Esophagus squamous epithelium (tissue), 5 donors: ENCODE measurements at regions of chr11 and their contacts with region 1.

Region 1: DNA sequence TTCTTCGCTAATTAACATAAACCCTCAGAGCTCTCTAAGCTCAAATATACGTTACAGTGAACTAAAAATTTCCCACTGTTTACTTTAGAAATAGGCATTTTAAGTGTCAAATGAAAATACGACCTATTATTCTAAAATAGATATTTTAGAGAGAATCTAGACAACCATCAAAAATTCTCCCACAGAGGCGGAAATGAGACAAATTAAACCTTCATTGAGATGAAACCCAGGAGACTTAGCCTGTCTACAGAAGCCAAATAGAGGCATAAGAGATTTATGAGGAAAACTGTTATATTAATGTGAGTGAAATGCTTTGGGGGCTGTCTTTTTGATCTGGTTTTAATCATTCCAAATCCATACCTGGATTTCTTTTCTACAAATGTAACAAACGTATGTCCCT is 232.0 kb upstream of the GRIA4 start:
- DNase-seq: no peak
- H3K4me3 ChIP-seq: no peak overlapping the region
- H3K27ac ChIP-seq: no peak overlapping the region
- H3K4me1 ChIP-seq: no peaks in the 10 kb centered on the region
- H3K27me3 ChIP-seq: no peaks in the 10 kb centered on the region
- CTCF ChIP-seq: no peak
- POLR2A ChIP-seq: no peak

Region 2: DNA sequence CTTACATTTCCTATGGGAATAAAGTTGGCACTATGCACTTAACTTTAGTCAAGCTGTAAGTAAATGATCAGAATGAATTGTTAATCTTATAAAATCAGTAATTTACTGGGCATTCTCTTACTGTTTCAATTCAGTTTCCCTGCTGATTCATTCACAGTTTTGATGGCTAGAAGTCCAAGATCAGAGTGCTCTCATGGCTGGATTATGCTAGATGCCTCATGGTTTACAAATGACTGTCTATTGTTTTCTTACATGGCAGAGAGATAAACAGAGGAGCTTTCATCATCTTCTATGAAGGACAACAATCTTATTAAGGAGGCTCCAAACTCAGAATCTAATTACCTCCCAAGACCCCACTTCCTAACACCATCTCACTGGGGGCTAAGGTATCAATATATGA is 103.2 kb before region 1 on chr11:
- intact Hi-C with region 1: no loop called
- DNase-seq: no peak
- H3K4me3 ChIP-seq: no peak overlapping the region
- H3K27ac ChIP-seq: no peak overlapping the region
- H3K4me1 ChIP-seq: no peaks in the 10 kb centered on the region
- H3K27me3 ChIP-seq: no peaks in the 10 kb centered on the region
- CTCF ChIP-seq: no peak
- POLR2A ChIP-seq: no peak

Region 3: DNA sequence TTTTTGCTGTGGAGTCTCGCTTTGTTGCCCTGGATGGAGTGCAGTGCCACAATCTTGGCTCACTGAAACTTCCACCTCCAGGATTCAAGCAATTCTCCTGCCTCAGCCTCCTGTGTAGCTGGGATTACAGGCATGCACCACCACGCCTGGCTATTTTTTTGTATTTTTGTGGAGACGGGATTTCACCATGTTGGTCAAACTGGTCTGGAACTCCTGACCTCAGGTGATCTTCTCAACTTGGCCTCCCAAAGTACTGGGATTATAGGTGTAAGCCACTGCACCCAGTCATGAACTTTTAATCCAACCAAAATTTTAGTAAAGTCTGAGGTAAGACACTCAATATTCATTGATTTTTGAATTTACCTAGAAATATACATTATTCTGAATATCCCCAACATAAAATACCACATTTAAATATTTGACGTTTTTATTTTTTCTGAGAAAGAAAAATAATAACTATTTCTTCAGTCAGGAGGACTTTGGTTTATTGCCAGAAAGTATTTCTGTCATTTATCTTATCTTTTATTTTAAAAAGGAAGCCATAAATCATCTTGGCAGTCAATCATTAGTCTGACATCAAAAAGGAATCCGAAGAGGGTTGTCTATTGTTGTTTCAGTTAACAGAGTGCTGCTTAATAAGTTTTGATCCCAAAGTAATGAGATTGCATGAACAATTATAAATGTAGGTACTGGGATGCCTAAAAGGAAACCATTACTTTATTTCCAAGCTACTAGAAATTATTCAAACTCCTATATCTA is 129.8 kb after region 1 on chr11:
- intact Hi-C with region 1: loop called (anchors 5 kb)
- DNase-seq: no peak
- H3K4me3 ChIP-seq: no peak overlapping the region
- H3K27ac ChIP-seq: no peak overlapping the region
- H3K4me1 ChIP-seq: no peaks in the 10 kb centered on the region
- H3K27me3 ChIP-seq: no peaks in the 10 kb centered on the region
- CTCF ChIP-seq: no peak
- POLR2A ChIP-seq: no peak

Region 4: DNA sequence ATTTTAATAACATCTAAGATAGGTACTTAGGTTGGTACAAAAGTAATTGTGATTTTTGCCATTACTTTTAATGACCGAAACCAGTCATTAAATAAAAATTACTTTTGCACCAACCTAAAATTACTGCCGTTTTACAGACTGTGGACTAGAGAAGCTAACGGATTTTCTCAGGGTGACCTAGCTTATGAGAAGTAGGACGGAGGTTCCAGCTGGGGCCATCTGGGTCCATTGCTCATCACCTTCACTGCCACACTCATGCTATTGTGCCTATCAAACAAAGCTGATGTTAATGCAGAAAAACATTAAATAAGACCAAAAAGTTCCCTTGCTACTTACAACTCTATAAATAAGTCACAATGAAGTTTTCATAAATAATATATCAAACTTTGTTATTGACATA is 270.9 kb after region 1 on chr11:
- intact Hi-C with region 1: no loop called
- DNase-seq: no peak
- H3K4me3 ChIP-seq: no peak overlapping the region
- H3K27ac ChIP-seq: no peak overlapping the region
- H3K4me1 ChIP-seq: no peaks in the 10 kb centered on the region
- H3K27me3 ChIP-seq: no peaks in the 10 kb centered on the region
- CTCF ChIP-seq: no peak
- POLR2A ChIP-seq: no peak

Region 5: GRCh38 chr11:105719073-105719822 is 341.4 kb after region 1 on chr11:
- intact Hi-C with region 1: no loop called
- DNase-seq: no peak
- H3K4me3 ChIP-seq: no peak overlapping the region
- H3K27ac ChIP-seq: no peak overlapping the region
- H3K4me1 ChIP-seq: no peaks in the 10 kb centered on the region
- H3K27me3 ChIP-seq: no peaks in the 10 kb centered on the region
- CTCF ChIP-seq: no peak
- POLR2A ChIP-seq: no peak